ENCODE measurements at regions of chr9 and their contacts with region 1.

Region 1: GRCh38 chr9:36023260-36024048 is 13.3 kb upstream of the RECK start:
- DNase-seq: peak; percentile 44
- ATAC-seq: peak; percentile 79
- H3K4me3 Mint-ChIP-seq: no peak overlapping the region
- H3K27ac Mint-ChIP-seq: no peak overlapping the region
- H3K4me1 Mint-ChIP-seq: no peaks in the 10 kb centered on the region
- H3K27me3 Mint-ChIP-seq: peaks cover 6% of the 10 kb centered on the region
- CTCF ChIP-seq: peak; percentile 85

Region 2: GRCh38 chr9:35903049-35903448 is 120.4 kb before region 1 on chr9:
- CTCF ChIA-PET with region 1: interaction called, 21 read pairs
- POLR2A ChIA-PET with region 1: no interaction called
- intact Hi-C with region 1: loop called (anchors 1 kb)
- DNase-seq: no peak
- ATAC-seq: peak; percentile 49
- H3K4me3 Mint-ChIP-seq: no peak overlapping the region
- H3K27ac Mint-ChIP-seq: no peak overlapping the region
- H3K4me1 Mint-ChIP-seq: no peaks in the 10 kb centered on the region
- H3K27me3 Mint-ChIP-seq: peaks cover 17% of the 10 kb centered on the region
- CTCF ChIP-seq: peak; percentile 79

Region 3: DNA sequence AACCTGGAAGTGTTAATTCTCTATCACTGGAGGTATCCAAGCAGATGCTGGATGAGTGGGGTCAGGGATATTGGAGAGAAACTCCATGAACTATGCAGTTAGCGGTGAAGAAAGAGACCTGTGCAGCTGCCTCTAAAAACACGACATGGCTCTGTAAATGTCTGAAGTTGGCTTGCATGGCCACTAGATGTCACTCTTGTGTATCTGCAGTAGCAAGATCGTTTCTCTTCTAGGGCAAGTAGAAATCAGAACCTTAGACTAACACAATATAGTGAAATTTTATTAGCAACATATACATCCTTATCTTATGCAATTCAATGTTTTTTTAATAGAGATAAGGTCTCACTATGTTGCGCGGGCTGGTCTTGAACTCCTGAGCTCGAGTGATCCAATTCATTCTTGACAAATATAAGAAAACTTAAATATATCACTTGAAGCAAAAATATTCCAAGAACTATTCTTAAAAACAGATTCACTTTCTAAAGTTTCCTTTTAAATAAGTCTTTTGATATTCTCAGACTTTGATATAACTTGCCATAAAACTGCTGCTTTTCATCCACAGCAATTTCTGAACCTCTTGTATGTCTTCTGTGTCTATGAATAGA is 68.4 kb before region 1 on chr9:
- CTCF ChIA-PET with region 1: interaction called, 58 read pairs
- POLR2A ChIA-PET with region 1: no interaction called
- intact Hi-C with region 1: loop called (anchors 1 kb)
- DNase-seq: no peak
- ATAC-seq: peak; percentile 75
- H3K4me3 Mint-ChIP-seq: no peak overlapping the region
- H3K27ac Mint-ChIP-seq: no peak overlapping the region
- H3K4me1 Mint-ChIP-seq: no peaks in the 10 kb centered on the region
- H3K27me3 Mint-ChIP-seq: peaks cover 22% of the 10 kb centered on the region
- CTCF ChIP-seq: peak; percentile 86

Region 4: DNA sequence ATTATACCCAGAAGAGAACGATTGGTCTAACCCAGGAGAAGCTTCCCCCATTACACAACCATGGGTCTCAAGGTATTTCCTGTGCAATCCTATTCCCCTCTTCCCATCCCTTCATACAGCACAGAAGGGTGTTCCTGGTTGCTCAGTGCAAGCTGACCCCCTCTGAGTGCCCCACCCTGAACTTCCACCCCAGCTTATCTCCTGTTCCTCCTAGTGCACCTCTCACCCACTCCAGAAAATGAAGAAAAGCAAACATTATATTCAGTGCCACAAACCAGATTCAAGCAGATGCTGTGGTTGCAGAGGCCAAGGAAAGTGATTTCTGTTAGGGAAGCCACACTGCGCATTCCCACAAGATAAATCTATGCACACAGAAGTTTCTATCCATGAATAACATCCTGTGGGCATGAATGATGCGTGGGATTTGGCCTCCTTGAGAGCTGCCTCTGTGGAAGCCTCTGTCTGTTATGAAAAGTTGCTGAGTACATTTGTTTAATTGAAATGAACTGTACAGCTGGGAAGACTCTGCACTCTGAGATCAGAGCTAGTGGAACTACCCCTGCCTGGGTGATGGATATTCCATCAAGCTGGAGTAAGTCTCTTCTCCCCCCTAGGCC is 63.3 kb before region 1 on chr9:
- CTCF ChIA-PET with region 1: interaction called, 58 read pairs
- POLR2A ChIA-PET with region 1: no interaction called
- intact Hi-C with region 1: loop called (anchors 1 kb)
- DNase-seq: no peak
- ATAC-seq: no peak
- H3K4me3 Mint-ChIP-seq: no peak overlapping the region
- H3K27ac Mint-ChIP-seq: no peak overlapping the region
- H3K4me1 Mint-ChIP-seq: no peaks in the 10 kb centered on the region
- H3K27me3 Mint-ChIP-seq: peaks cover 16% of the 10 kb centered on the region
- CTCF ChIP-seq: no peak

Region 5: DNA sequence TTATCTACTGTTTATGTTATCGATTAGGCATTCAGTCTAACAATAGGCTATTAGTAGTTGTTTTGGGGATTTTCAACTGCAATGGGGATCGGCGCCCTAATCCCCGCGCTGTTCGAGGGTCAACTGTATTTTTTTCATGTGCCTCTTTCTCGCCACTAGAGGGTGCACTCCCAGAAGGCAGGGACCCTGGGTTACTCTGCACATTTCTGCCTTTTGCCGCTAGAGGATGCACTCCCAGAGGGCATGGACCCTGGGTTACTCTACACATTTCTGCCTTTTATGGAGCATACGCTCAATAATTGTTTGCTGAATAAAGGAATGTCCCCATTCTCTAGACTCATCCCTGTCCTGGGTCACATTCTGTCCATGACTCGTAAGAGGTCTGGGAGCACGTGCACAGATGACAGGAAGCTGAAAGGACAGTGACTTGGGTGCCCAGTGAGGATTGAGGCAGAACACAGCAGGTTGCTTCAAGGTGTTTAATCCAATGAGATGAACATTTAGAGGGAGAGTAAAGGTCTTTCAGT is 14.6 kb before region 1 on chr9:
- CTCF ChIA-PET with region 1: interaction called, 22 read pairs
- POLR2A ChIA-PET with region 1: no interaction called
- intact Hi-C with region 1: loop called (anchors 1 kb)
- DNase-seq: peak; percentile 20
- ATAC-seq: peak; percentile 92
- H3K4me3 Mint-ChIP-seq: no peak overlapping the region
- H3K27ac Mint-ChIP-seq: no peak overlapping the region
- H3K4me1 Mint-ChIP-seq: peaks cover 32% of the 10 kb centered on the region
- H3K27me3 Mint-ChIP-seq: peaks cover 19% of the 10 kb centered on the region
- CTCF ChIP-seq: peak; percentile 54

Measured in activated B cell treated with CpG ODN at 0.5 μM for 24 hours (primary cell).